ENCODE measurements at regions of chr6 and their contacts with region 1.

Region 1: GRCh38 chr6:122471107-122472021 is at the start of gene SERINC1:
- DNase-seq: peak; percentile 92
- ATAC-seq: peak; percentile 99
- H3K4me3 ChIP-seq: peak within 1 kb of the TSS; percentile 82 to 96 (median 92)
- H3K27ac ChIP-seq: peak within 1 kb of the TSS; percentile 75
- H3K4me1 ChIP-seq: peaks cover 27% of the 10 kb centered on the region
- H3K27me3 ChIP-seq: no peaks in the 10 kb centered on the region; a peak in 2 of 5 replicates
- CTCF ChIP-seq: no peak; the same call in 1 of the 2 replicates
- EP300 ChIP-seq: no peak
- POLR2A ChIP-seq: peak; percentile 91 to 92
- RAD21 ChIP-seq: no peak
- total RNA-seq, gene SERINC1: 62.2 and 112 TPM in 2 replicates

Region 2: GRCh38 chr6:122381497-122382265 is 89.7 kb before region 1 on chr6:
- CTCF ChIA-PET with region 1: interaction called, 4 read pairs
- POLR2A ChIA-PET with region 1: no interaction called
- in situ Hi-C with region 1: no loop called
- intact Hi-C with region 1: loop called (anchors 5 kb)
- DNase-seq: peak; percentile 69
- ATAC-seq: peak; percentile 98
- H3K4me3 ChIP-seq: no peak overlapping the region
- H3K27ac ChIP-seq: no peak overlapping the region
- H3K4me1 ChIP-seq: no peaks in the 10 kb centered on the region
- H3K27me3 ChIP-seq: 0 out of 5 replicates have a peak, but pooled peaks cover 0 to 5% of the 10 kb centered on the region in 2 experiments
- CTCF ChIP-seq: peak; percentile 81
- EP300 ChIP-seq: no peak
- POLR2A ChIP-seq: no peak
- RAD21 ChIP-seq: peak; percentile 46; the same call in 1 of the 2 replicates

Region 3: GRCh38 chr6:122399384-122400158 is 71.8 kb before region 1 on chr6 and contains the start of gene HSF2:
- CTCF ChIA-PET with region 1: no interaction called
- POLR2A ChIA-PET with region 1: interaction called, 10 read pairs
- in situ Hi-C with region 1: no loop called
- intact Hi-C with region 1: loop called (anchors 5 kb)
- DNase-seq: peak; percentile 96
- ATAC-seq: peak; percentile 100
- H3K4me3 ChIP-seq: peak within 1 kb of the TSS; percentile 65 to 100 (median 97)
- H3K27ac ChIP-seq: peak within 1 kb of the TSS; percentile 88
- H3K4me1 ChIP-seq: peaks cover 37% of the 10 kb centered on the region
- H3K27me3 ChIP-seq: peaks cover 0 to 2% of the 10 kb centered on the region in 2 experiments; a peak in 1 of 5 replicates
- CTCF ChIP-seq: peak; percentile 61
- EP300 ChIP-seq: no peak
- POLR2A ChIP-seq: peak; percentile 78 to 81
- RAD21 ChIP-seq: peak; percentile 32
- total RNA-seq, gene HSF2: 24.8 and 27.6 TPM in 2 replicates

Region 4: DNA sequence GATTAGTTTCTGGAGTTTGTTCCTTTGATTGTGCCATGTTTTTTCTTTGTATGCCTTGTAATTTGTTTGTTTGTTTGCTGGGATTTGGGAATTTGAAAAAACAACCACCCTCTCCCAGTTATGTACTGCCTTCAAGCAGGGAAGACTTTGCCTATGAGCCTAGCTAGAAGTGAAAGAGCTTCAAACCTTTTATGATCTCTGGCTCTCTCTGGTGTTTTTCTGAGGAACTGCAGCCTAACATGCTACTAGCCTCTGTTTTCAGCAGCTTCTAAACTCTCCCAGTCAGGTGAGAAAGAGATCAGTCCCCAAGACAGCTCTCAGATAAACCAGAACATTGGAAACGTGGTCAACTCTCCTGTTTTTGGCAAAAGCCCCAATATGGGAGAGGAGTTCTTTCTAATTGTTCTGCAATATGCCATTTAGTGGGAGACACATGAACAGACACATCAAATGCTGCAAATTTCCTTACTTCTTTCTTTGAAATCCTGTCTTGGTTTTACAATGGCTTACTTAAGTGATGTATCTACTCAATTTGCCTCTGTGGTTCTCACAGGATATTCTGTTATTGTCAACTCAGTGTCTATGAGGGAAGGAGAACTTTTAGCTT is 59.2 kb after region 1 on chr6:
- CTCF ChIA-PET with region 1: interaction called, 19 read pairs
- POLR2A ChIA-PET with region 1: interaction called, 5 read pairs
- in situ Hi-C with region 1: no loop called
- intact Hi-C with region 1: loop called (anchors 1 kb)
- DNase-seq: peak; percentile 69
- ATAC-seq: peak; percentile 96
- H3K4me3 ChIP-seq: no peak overlapping the region
- H3K27ac ChIP-seq: no peak overlapping the region
- H3K4me1 ChIP-seq: no peaks in the 10 kb centered on the region
- H3K27me3 ChIP-seq: no peaks in the 10 kb centered on the region
- CTCF ChIP-seq: peak; percentile 90
- EP300 ChIP-seq: no peak
- POLR2A ChIP-seq: no peak
- RAD21 ChIP-seq: peak; percentile 75

Region 5: GRCh38 chr6:122609856-122610689 is 138.7 kb after region 1 on chr6 and contains the start of gene PKIB:
- CTCF ChIA-PET with region 1: no interaction called
- POLR2A ChIA-PET with region 1: no interaction called
- in situ Hi-C with region 1: no loop called
- intact Hi-C with region 1: loop called (anchors 5 kb)
- DNase-seq: peak; percentile 64
- ATAC-seq: peak; percentile 100
- H3K4me3 ChIP-seq: peak within 1 kb of the TSS; percentile 45 to 72 (median 58)
- H3K27ac ChIP-seq: no peak within 1 kb of the TSS
- H3K4me1 ChIP-seq: peaks cover 18% of the 10 kb centered on the region
- H3K27me3 ChIP-seq: peaks cover 4 to 20% of the 10 kb centered on the region in 2 experiments; a peak in 4 of 5 replicates
- CTCF ChIP-seq: peak; percentile 69
- EP300 ChIP-seq: no peak
- POLR2A ChIP-seq: no peak
- RAD21 ChIP-seq: peak; percentile 73
- total RNA-seq, gene PKIB: 1.5 and 2.2 TPM in 2 replicates

Region 6: GRCh38 chr6:122789182-122790027 is 318.0 kb after region 1 on chr6 and contains the start of gene SMPDL3A:
- CTCF ChIA-PET with region 1: no interaction called
- POLR2A ChIA-PET with region 1: interaction called, 7 read pairs
- in situ Hi-C with region 1: no loop called
- intact Hi-C with region 1: loop called (anchors 5 kb)
- DNase-seq: peak; percentile 76
- ATAC-seq: peak; percentile 88
- H3K4me3 ChIP-seq: peak within 1 kb of the TSS; percentile 73 to 95 (median 77)
- H3K27ac ChIP-seq: peak within 1 kb of the TSS; percentile 91
- H3K4me1 ChIP-seq: peaks cover 44% of the 10 kb centered on the region
- H3K27me3 ChIP-seq: no peaks in the 10 kb centered on the region; a peak in 1 of 5 replicates
- CTCF ChIP-seq: peak; percentile 91
- EP300 ChIP-seq: peak in 1 of 2 experiments; percentile 13; a peak in 1 of 4 replicates
- POLR2A ChIP-seq: peak; percentile 55 to 72
- RAD21 ChIP-seq: peak; percentile 90
- total RNA-seq, gene SMPDL3A: 6.4 and 7.8 TPM in 2 replicates